Caco-2 (cell line): ENCODE measurements at regions of chr20 and their contacts with region 1.

Region 1: DNA sequence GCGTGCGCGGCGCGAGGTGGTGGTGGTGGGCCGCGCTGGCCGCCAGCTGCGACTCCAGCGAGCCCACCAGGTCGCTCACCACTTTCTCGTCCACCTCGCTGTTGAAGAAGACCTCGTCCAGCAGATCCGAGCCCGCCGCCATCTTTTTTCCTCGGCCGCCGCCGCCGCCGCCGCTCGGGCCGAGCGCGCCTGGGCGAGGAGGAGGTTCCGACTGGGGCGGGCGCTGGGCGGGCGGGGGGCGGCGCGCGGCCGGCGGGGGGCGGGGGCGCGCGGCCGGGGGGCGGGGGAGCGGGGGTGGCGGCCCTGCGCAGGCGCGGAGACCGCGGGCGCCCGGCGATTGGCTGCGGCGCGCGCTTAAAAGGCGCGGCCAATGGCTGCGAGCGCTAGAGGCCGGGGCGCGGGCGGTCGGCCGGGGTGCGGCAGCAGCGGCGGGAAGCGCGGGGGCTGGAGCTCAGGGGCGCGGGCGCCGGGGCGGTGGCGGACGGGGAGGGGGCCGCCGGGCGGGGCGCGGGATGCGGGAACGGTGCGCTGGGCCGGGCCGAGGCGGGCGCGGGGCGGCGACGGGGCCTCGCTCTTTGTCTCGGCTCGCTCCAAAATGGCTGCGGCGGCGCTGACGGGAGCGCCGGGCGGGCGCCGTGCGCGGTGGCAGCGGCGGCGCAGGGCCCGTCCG is at the start of gene TAF4:
- DNase-seq: peak; percentile 88 to 92
- H3K4me3 ChIP-seq: peak within 1 kb of the TSS; percentile 68
- H3K4me3 Mint-ChIP-seq: peak within 1 kb of the TSS; percentile 85
- H3K27ac Mint-ChIP-seq: peak within 1 kb of the TSS; percentile 91
- H3K4me1 ChIP-seq: peaks cover 28% of the 10 kb centered on the region
- H3K4me1 Mint-ChIP-seq: peaks cover 38% of the 10 kb centered on the region
- H3K27me3 ChIP-seq: no peaks in the 10 kb centered on the region
- H3K27me3 Mint-ChIP-seq: no peaks in the 10 kb centered on the region
- CTCF ChIP-seq: no peak
- total RNA-seq, gene TAF4: 94.9 and 98.2 TPM in 2 replicates

Region 2: DNA sequence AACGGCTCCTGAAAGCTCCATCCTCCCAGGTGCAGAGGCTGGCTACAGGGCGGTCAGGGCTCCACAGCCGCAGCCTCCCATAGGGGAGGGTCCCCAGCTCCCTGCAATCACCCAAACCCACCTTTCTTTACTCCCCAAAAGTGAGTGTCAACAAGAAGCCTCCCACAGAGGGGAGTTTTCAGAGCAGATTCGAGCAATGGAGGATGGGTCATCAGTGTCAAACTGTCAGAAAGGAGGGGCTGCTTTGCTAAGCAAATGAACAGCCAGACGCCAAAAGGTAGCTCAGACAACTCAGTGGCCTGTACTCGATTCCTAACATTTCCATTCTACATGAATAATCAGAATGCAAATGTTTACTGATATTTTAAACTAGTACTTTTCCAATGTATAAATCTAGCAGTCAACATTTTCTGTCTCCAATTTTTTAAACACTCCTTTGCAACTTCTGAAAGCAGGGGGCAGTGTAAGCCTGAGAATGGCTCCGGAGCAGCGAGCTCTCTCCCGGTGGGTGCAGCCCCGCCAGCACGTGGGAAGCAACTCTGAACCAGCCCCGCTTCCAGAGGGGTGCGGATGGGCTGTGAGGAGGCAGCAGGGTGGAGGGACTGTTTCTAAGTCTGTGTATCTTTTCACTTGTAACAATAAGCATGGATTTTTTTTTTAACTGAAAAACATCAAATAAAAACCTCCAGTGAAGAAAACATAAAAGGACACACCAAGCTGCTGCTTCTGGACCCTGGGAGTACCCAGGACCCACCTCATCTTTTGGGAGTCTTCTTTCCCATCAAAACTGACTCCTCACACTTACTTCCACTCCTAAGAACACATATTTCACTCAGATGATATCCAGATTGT is 55.0 kb before region 1 on chr20:
- CTCF ChIA-PET with region 1: interaction called, 8 read pairs
- POLR2A ChIA-PET with region 1: interaction called, 11 read pairs
- intact Hi-C with region 1: loop called (anchors 5 kb)
- DNase-seq: peak in 1 of 2 experiments; percentile 82
- H3K4me3 ChIP-seq: no peak overlapping the region
- H3K4me3 Mint-ChIP-seq: no peak overlapping the region
- H3K27ac Mint-ChIP-seq: peak overlapping the region; percentile 5
- H3K4me1 ChIP-seq: no peaks in the 10 kb centered on the region
- H3K4me1 Mint-ChIP-seq: no peaks in the 10 kb centered on the region
- H3K27me3 ChIP-seq: no peaks in the 10 kb centered on the region
- H3K27me3 Mint-ChIP-seq: no peaks in the 10 kb centered on the region
- CTCF ChIP-seq: peak; percentile 88 to 93

Region 3: GRCh38 chr20:62121776-62122631 is 56.2 kb after region 1 on chr20 and contains the start of gene LSM14B:
- CTCF ChIA-PET with region 1: interaction called, 16 read pairs
- POLR2A ChIA-PET with region 1: interaction called, 67 read pairs
- intact Hi-C with region 1: loop called (anchors 1 kb)
- DNase-seq: peak; percentile 99 to 100
- H3K4me3 ChIP-seq: peak within 1 kb of the TSS; percentile 96
- H3K4me3 Mint-ChIP-seq: peak within 1 kb of the TSS; percentile 76
- H3K27ac Mint-ChIP-seq: peak within 1 kb of the TSS; percentile 65
- H3K4me1 ChIP-seq: peaks cover 19% of the 10 kb centered on the region
- H3K4me1 Mint-ChIP-seq: peaks cover 28% of the 10 kb centered on the region
- H3K27me3 ChIP-seq: no peaks in the 10 kb centered on the region
- H3K27me3 Mint-ChIP-seq: peaks cover 10% of the 10 kb centered on the region
- CTCF ChIP-seq: no peak
- total RNA-seq, gene LSM14B: 143 and 154 TPM in 2 replicates

Region 4: GRCh38 chr20:62177307-62177706 is 111.5 kb after region 1 on chr20:
- CTCF ChIA-PET with region 1: no interaction called
- POLR2A ChIA-PET with region 1: no interaction called
- intact Hi-C with region 1: no loop called
- DNase-seq: no peak
- H3K4me3 ChIP-seq: no peak overlapping the region
- H3K4me3 Mint-ChIP-seq: no peak overlapping the region
- H3K27ac Mint-ChIP-seq: no peak overlapping the region
- H3K4me1 ChIP-seq: peaks cover 5% of the 10 kb centered on the region
- H3K4me1 Mint-ChIP-seq: peaks cover 8% of the 10 kb centered on the region
- H3K27me3 ChIP-seq: no peaks in the 10 kb centered on the region
- H3K27me3 Mint-ChIP-seq: no peaks in the 10 kb centered on the region
- CTCF ChIP-seq: no peak